Activated naive CD4-positive, alpha-beta T cell treated with anti-CD3 and anti-CD28 coated beads for 36 hours (primary cell): ENCODE measurements at regions of chr2 and their contacts with region 1.

Region 1: GRCh38 chr2:135797497-135798274 is 39.3 kb downstream of the LCT start:
- DNase-seq: peak; percentile 91
- H3K4me3 Mint-ChIP-seq: no peak overlapping the region
- H3K27ac Mint-ChIP-seq: no peak overlapping the region
- H3K4me1 Mint-ChIP-seq: peaks cover 15% of the 10 kb centered on the region
- H3K27me3 Mint-ChIP-seq: no peaks in the 10 kb centered on the region

Region 2: GRCh38 chr2:134988994-134989605 is 808.6 kb before region 1 on chr2:
- CTCF ChIA-PET with region 1: interaction called, 11 read pairs
- intact Hi-C with region 1: loop called (anchors 5 kb)
- DNase-seq: no peak
- H3K4me3 Mint-ChIP-seq: no peak overlapping the region
- H3K27ac Mint-ChIP-seq: no peak overlapping the region
- H3K4me1 Mint-ChIP-seq: no peaks in the 10 kb centered on the region
- H3K27me3 Mint-ChIP-seq: no peaks in the 10 kb centered on the region

Region 3: DNA sequence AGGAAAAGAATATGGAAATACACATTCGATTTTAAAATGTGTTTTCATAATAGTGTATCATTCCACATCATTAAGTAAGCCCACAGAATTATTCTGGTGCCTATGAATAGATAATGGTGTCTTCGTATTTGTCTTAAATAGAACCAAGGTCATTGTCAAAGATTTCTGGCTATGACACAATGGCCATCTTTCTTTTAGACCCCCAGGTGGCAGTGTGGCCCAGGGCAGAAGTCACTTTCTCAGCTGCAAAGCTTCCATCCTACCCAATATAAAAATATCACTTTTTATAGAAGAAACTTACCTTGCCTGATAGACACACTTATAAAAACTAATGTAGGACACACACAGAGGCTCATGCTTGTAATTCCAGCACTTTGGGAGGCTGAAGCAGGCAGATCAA is 324.1 kb before region 1 on chr2:
- CTCF ChIA-PET with region 1: interaction called, 5 read pairs
- intact Hi-C with region 1: loop called (anchors 1 kb)
- DNase-seq: peak; percentile 40
- H3K4me3 Mint-ChIP-seq: no peak overlapping the region
- H3K27ac Mint-ChIP-seq: no peak overlapping the region
- H3K4me1 Mint-ChIP-seq: peaks cover 2% of the 10 kb centered on the region
- H3K27me3 Mint-ChIP-seq: no peaks in the 10 kb centered on the region

Region 4: GRCh38 chr2:135756692-135757091 is 41.0 kb before region 1 on chr2:
- CTCF ChIA-PET with region 1: interaction called, 10 read pairs
- intact Hi-C with region 1: no loop called
- DNase-seq: no peak
- H3K4me3 Mint-ChIP-seq: no peak overlapping the region
- H3K27ac Mint-ChIP-seq: no peak overlapping the region
- H3K4me1 Mint-ChIP-seq: peaks cover 7% of the 10 kb centered on the region
- H3K27me3 Mint-ChIP-seq: no peaks in the 10 kb centered on the region

Region 5: DNA sequence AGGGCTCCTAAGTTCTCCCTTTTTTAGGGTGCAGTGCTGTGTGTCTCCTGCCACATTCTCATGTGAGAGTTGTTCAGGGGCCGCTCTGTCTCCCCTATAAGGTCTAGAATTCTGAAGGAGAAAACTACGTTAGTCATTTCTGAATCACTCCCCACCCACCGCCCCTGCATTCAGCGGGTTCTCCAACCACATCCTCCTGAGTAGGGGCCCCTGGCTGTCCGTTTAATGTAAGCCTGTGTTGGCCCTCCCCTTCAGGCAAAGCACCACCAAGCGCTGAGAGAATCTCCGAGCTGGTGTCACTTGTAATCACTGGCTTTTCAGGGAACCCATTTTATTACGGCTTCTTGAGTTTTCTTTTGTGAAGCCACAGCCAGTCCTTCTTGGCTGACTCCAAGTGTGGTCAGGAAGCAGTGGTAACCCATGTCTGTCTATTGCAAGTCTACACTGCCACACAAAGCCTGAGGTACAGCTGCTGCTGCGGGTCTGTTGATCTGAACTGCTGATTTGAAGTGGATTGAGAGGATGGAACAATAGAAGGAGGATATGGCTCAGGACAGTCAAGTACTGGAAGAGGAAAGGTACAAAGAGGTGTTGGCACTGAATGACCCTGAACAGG is 22.4 kb after region 1 on chr2:
- CTCF ChIA-PET with region 1: interaction called, 46 read pairs
- intact Hi-C with region 1: loop called (anchors 1 kb)
- DNase-seq: peak; percentile 94
- H3K4me3 Mint-ChIP-seq: peak overlapping the region; percentile 64
- H3K27ac Mint-ChIP-seq: peak overlapping the region; percentile 79
- H3K4me1 Mint-ChIP-seq: peaks cover 48% of the 10 kb centered on the region
- H3K27me3 Mint-ChIP-seq: no peaks in the 10 kb centered on the region

Region 6: GRCh38 chr2:135839713-135840112 is 42.0 kb after region 1 on chr2:
- CTCF ChIA-PET with region 1: interaction called, 14 read pairs
- intact Hi-C with region 1: no loop called
- DNase-seq: no peak
- H3K4me3 Mint-ChIP-seq: no peak overlapping the region
- H3K27ac Mint-ChIP-seq: no peak overlapping the region
- H3K4me1 Mint-ChIP-seq: peaks cover 17% of the 10 kb centered on the region
- H3K27me3 Mint-ChIP-seq: no peaks in the 10 kb centered on the region

Region 7: DNA sequence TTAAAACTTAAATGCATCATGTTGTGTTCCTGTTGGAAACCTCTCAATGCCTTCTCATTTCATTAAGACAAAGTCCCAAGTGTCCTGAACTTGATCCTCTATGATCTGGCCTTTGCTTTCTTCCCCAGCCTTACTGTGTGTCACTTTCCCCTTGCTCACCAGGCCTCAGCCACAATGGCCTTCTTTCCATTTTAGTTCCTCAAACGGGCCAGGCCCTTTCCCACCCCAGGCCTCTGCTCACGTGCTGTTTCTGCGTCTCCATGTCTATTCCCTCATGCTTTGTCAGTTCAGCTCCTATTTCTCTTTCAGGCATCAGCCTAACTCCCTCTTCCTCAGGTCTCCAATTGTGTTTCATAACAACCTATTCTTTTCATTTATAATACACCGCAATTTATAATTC is 300.8 kb after region 1 on chr2:
- CTCF ChIA-PET with region 1: no interaction called
- intact Hi-C with region 1: no loop called
- DNase-seq: no peak
- H3K4me3 Mint-ChIP-seq: no peak overlapping the region
- H3K27ac Mint-ChIP-seq: no peak overlapping the region
- H3K4me1 Mint-ChIP-seq: peaks cover 2% of the 10 kb centered on the region
- H3K27me3 Mint-ChIP-seq: no peaks in the 10 kb centered on the region